Lower leg skin (tissue), 4 donors: ENCODE measurements at regions of chr10 and their contacts with region 1.

Region 1: DNA sequence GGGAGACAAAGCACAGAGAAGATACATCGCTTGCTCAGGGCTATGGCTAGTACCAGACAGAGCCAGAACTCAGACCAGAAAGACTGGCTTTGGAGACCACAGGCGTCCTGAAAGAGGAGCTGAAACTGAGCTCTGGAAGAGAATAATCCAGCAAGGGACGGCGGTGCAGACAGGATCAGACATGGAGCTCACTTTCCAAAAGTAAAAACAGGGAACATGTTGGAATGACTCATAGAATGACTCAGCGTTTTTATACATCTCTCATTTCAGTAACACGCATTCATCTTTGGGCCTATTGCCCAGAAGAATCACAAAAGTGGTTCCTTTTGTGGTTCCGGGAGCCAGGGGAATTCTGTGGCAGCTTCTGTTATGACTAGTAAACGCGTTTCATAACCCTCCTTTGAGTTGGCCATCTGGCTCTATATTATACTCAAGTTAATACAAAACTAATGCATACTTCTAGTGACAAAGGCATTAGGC is 37.2 kb downstream of the PLEKHS1 start:
- DNase-seq: peak in 1 of 2 donors; percentile 52
- H3K4me3 ChIP-seq: no peak overlapping the region
- CTCF ChIP-seq: no peak
- POLR2A ChIP-seq: no peak

Region 2: GRCh38 chr10:112261281-112261822 is 1527.3 kb before region 1 on chr10:
- intact Hi-C with region 1: loop called (anchors 10 kb)
- DNase-seq: no peak
- H3K4me3 ChIP-seq: no peak overlapping the region
- CTCF ChIP-seq: peak in 1 of 3 donors; percentile 12
- POLR2A ChIP-seq: no peak

Region 3: GRCh38 chr10:113775686-113776294 is 12.9 kb before region 1 on chr10:
- intact Hi-C with region 1: no loop called
- DNase-seq: no peak
- H3K4me3 ChIP-seq: no peak overlapping the region
- CTCF ChIP-seq: no peak
- POLR2A ChIP-seq: no peak

Region 4: GRCh38 chr10:113843972-113844485 is 55.4 kb after region 1 on chr10:
- intact Hi-C with region 1: no loop called
- DNase-seq: no peak
- H3K4me3 ChIP-seq: no peak overlapping the region
- CTCF ChIP-seq: no peak
- POLR2A ChIP-seq: no peak